Aorta (tissue), 5 donors: ENCODE measurements at regions of chr4 and their contacts with region 1.

Region 1: GRCh38 chr4:181528570-181529184 is 714.5 kb upstream of the TENM3 start:
- DNase-seq: peak; percentile 48 to 76
- ATAC-seq: peak; percentile 37
- H3K4me3 ChIP-seq: no peak overlapping the region
- H3K27ac ChIP-seq: no peak overlapping the region
- H3K4me1 ChIP-seq: no peaks in the 10 kb centered on the region
- H3K27me3 ChIP-seq: no peaks in the 10 kb centered on the region

Region 2: GRCh38 chr4:181143250-181143854 is 385.3 kb before region 1 on chr4:
- intact Hi-C with region 1: loop called in 1 of 2 experiments (anchors 10 kb)
- DNase-seq: peak; percentile 73 to 89
- ATAC-seq: peak; percentile 67
- H3K4me3 ChIP-seq: no peak overlapping the region
- H3K27ac ChIP-seq: no peak overlapping the region
- H3K4me1 ChIP-seq: no peaks in the 10 kb centered on the region
- H3K27me3 ChIP-seq: no peaks in the 10 kb centered on the region

Region 3: DNA sequence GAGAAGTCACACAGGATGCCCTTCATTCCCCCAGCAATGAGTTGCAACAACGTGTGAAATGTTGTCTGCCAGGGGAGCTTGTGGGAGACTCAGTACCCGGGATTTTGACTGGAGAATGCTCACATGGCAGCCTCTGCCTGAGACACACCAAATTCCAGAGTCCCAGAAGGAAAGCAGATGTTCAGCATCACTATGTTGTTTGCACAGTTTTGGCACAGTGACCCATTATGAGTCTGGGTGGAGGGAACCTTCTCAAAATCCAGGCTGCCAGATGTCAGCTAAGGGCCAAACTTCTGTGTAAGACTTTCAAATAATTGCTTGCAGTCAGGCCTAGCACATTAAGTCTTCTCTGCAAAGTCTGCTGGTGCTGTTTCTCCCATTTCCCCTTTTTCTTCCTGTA is 315.1 kb before region 1 on chr4:
- intact Hi-C with region 1: no loop called
- DNase-seq: no peak
- ATAC-seq: no peak
- H3K4me3 ChIP-seq: no peak overlapping the region
- H3K27ac ChIP-seq: no peak overlapping the region
- H3K4me1 ChIP-seq: no peaks in the 10 kb centered on the region
- H3K27me3 ChIP-seq: no peaks in the 10 kb centered on the region